Activated naive CD4-positive, alpha-beta T cell treated with anti-CD3 and anti-CD28 coated beads for 36 hours (primary cell): ENCODE measurements at regions of chr4 and their contacts with region 1.

Region 1: DNA sequence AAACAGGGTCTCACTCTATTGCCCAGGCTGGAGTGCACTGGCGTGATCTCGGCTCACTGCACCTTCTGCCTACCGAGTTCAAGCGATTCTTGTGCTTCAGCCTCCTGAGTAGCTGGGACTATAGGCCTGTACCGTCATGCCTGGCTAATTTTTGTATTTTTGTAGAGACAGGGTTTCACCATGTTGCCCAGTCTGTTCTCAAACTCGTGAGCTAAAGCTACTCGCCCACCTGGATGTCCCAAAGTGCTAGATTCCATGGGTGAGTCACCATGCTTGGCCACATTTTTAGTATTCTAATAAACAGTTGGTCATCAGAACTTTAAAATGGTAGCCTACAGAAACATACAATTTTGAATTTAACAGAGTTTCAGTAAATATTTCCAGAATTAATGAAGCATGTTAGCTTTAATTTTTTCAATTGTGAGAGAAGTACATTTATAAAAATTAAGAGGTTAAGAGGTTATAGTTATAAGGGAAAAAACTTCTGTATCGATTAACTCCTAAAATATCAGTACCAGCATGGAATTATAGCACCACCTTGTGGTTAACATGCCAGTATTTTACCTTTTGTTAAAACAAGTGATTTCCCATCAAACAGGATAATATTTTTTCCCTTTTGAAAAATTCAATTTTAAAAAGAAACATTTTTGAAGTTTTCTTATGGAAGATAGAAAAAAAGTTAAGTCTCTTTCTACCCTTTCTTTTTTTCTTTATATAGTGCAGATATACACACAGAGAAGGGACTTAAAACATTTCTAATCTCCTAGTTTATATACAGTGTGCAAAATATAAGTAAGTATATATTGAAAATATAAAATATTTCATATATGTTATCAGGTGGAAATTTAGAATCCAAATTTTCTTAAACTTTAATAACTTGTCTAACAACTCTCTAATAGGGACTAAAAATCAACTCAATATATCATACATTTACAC is 35.4 kb downstream of the CEP44 start:
- DNase-seq: no peak
- H3K4me3 Mint-ChIP-seq: no peak overlapping the region
- H3K27ac Mint-ChIP-seq: no peak overlapping the region
- H3K4me1 Mint-ChIP-seq: no peaks in the 10 kb centered on the region
- H3K27me3 Mint-ChIP-seq: no peaks in the 10 kb centered on the region

Region 2: GRCh38 chr4:173958445-173958844 is 360.7 kb before region 1 on chr4:
- CTCF ChIA-PET with region 1: no interaction called
- intact Hi-C with region 1: no loop called
- DNase-seq: no peak
- H3K4me3 Mint-ChIP-seq: no peak overlapping the region
- H3K27ac Mint-ChIP-seq: no peak overlapping the region
- H3K4me1 Mint-ChIP-seq: no peaks in the 10 kb centered on the region
- H3K27me3 Mint-ChIP-seq: no peaks in the 10 kb centered on the region

Region 3: GRCh38 chr4:174120446-174121295 is 198.4 kb before region 1 on chr4:
- CTCF ChIA-PET with region 1: no interaction called
- intact Hi-C with region 1: loop called (anchors 2 kb)
- DNase-seq: peak; percentile 27
- H3K4me3 Mint-ChIP-seq: no peak overlapping the region
- H3K27ac Mint-ChIP-seq: no peak overlapping the region
- H3K4me1 Mint-ChIP-seq: no peaks in the 10 kb centered on the region
- H3K27me3 Mint-ChIP-seq: peaks cover 43% of the 10 kb centered on the region

Region 4: DNA sequence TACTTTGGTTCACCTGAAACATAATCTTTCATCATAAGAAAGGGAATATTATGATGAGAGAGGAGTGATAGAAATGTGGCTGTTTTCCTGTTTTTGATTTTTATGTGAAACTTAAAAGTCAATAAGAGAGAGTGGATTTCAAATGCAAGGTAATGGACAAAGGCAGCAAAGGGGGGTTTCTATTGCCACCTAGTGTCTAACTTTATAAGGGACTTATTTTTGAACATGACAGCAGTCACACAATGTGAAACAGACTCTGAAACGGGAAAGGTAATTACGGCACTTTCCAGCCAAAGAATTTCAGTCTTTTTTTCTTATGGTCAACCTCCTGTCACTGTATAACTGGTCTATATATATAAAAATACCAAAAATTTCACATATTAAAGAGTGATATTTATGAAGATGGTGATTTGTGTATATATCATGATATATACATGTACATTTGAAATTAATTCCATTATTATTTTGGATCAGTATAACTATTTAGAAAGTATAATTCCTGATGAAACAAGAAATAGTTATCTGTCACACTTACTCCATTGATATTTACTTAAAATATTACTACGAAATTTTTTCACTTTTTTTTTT is 162.8 kb before region 1 on chr4:
- CTCF ChIA-PET with region 1: no interaction called
- intact Hi-C with region 1: loop called (anchors 5 kb)
- DNase-seq: no peak
- H3K4me3 Mint-ChIP-seq: no peak overlapping the region
- H3K27ac Mint-ChIP-seq: no peak overlapping the region
- H3K4me1 Mint-ChIP-seq: no peaks in the 10 kb centered on the region
- H3K27me3 Mint-ChIP-seq: peaks cover 17% of the 10 kb centered on the region

Region 5: GRCh38 chr4:174265916-174266315 is 53.2 kb before region 1 on chr4:
- CTCF ChIA-PET with region 1: no interaction called
- intact Hi-C with region 1: no loop called
- DNase-seq: no peak
- H3K4me3 Mint-ChIP-seq: no peak overlapping the region
- H3K27ac Mint-ChIP-seq: no peak overlapping the region
- H3K4me1 Mint-ChIP-seq: peaks cover 12% of the 10 kb centered on the region
- H3K27me3 Mint-ChIP-seq: no peaks in the 10 kb centered on the region